Panc1 (cell line): ENCODE measurements at regions of chr3 and their contacts with region 1.

Region 1: DNA sequence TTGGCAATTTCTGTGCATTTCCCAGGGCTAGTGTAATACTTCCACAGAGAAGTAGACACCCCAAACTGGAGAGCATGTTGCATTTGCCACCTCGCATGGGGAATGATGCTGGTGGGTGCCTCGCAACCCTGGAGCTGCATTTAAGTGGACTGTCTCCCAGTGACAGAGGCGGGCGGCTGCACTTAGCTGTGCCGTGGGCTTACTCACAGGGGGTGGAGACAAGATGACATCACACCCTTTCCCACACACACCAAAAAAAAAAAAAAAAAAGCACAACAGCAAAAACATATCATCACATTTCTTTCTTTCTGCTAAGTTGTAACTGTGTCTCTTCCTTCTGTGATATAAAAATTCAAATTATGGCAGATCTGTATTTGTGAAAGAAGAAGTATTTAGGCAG is at the start of gene ABI3BP:
- DNase-seq: no peak
- ATAC-seq: no peak
- H3K4me3 ChIP-seq: no peak within 1 kb of the TSS
- H3K27ac ChIP-seq: no peak within 1 kb of the TSS
- H3K4me1 ChIP-seq: no peaks in the 10 kb centered on the region
- H3K27me3 ChIP-seq: no peaks in the 10 kb centered on the region; the same call in 1 of the 2 replicates
- CTCF ChIP-seq: no peak
- total RNA-seq, gene ABI3BP: 0.21 TPM

Region 2: GRCh38 chr3:100737334-100737733 is 256.0 kb before region 1 on chr3:
- CTCF ChIA-PET with region 1: no interaction called
- POLR2A ChIA-PET with region 1: no interaction called
- in situ Hi-C with region 1: no loop called
- intact Hi-C with region 1: no loop called
- DNase-seq: no peak
- ATAC-seq: peak; percentile 70; the same call in 1 of the 2 replicates
- H3K4me3 ChIP-seq: no peak overlapping the region
- H3K27ac ChIP-seq: no peak overlapping the region
- H3K4me1 ChIP-seq: no peaks in the 10 kb centered on the region
- H3K27me3 ChIP-seq: no peaks in the 10 kb centered on the region
- CTCF ChIP-seq: peak; percentile 53; the same call in 1 of the 2 replicates

Region 3: DNA sequence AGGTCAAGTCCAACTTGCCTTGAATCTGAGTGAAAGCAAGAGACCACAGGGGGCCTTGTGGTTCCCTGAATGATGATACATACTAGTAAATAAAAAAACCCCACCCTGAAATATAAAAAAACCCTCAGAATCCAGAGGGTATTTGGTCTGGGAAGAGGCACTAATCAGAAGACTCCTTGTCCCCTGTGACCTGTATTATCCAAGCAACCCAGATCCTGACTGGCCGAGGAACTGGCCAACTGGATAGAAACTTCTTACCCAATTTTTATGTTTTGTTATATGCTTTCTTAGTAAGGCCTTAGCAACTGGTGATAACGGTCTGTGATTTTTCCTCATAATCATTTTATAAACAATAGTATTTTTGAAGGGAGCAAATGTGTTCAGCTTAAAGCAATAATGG is 17.6 kb before region 1 on chr3:
- CTCF ChIA-PET with region 1: interaction called, 12 read pairs
- POLR2A ChIA-PET with region 1: interaction called, 3 read pairs
- in situ Hi-C with region 1: no loop called
- intact Hi-C with region 1: no loop called
- DNase-seq: no peak
- ATAC-seq: no peak
- H3K4me3 ChIP-seq: no peak overlapping the region
- H3K27ac ChIP-seq: no peak overlapping the region
- H3K4me1 ChIP-seq: no peaks in the 10 kb centered on the region
- H3K27me3 ChIP-seq: no peaks in the 10 kb centered on the region
- CTCF ChIP-seq: no peak

Region 4: GRCh38 chr3:101235048-101235447 is 241.7 kb after region 1 on chr3:
- CTCF ChIA-PET with region 1: no interaction called
- POLR2A ChIA-PET with region 1: no interaction called
- in situ Hi-C with region 1: no loop called
- intact Hi-C with region 1: no loop called
- DNase-seq: no peak
- ATAC-seq: no peak
- H3K4me3 ChIP-seq: no peak overlapping the region
- H3K27ac ChIP-seq: no peak overlapping the region
- H3K4me1 ChIP-seq: no peaks in the 10 kb centered on the region
- H3K27me3 ChIP-seq: no peaks in the 10 kb centered on the region
- CTCF ChIP-seq: no peak